Heart right ventricle (tissue), 16 donors: ENCODE measurements at regions of chr19 and their contacts with region 1.

Region 1: GRCh38 chr19:771332-771785 is 20.4 kb downstream of the MISP start:
- DNase-seq: peak in 1 of 2 donors; percentile 57
- ATAC-seq: peak in 6 of 8 donors; percentile 31 to 68 (median 60)
- H3K4me3 ChIP-seq: no peak overlapping the region
- H3K27ac ChIP-seq: no peak overlapping the region
- H3K4me1 ChIP-seq: peaks cover 0 to 12% (median 7%) of the 10 kb centered on the region in 9 donors
- H3K27me3 ChIP-seq: no peaks in the 10 kb centered on the region
- CTCF ChIP-seq: peak; percentile 39 to 67 (median 60)

Region 2: GRCh38 chr19:802498-803098 is 31.2 kb after region 1 on chr19:
- intact Hi-C with region 1: no loop called
- DNase-seq: peak in 1 of 2 donors; percentile 27
- ATAC-seq: no peak
- H3K4me3 ChIP-seq: peak overlapping the region in 8 of 10 donors; percentile 12 to 94 (median 82)
- H3K27ac ChIP-seq: peak overlapping the region in 8 of 10 donors; percentile 72 to 100 (median 96)
- H3K4me1 ChIP-seq: peaks cover 50 to 78% (median 61%) of the 10 kb centered on the region in 9 donors
- H3K27me3 ChIP-seq: no peaks in the 10 kb centered on the region
- CTCF ChIP-seq: no peak

Region 3: DNA sequence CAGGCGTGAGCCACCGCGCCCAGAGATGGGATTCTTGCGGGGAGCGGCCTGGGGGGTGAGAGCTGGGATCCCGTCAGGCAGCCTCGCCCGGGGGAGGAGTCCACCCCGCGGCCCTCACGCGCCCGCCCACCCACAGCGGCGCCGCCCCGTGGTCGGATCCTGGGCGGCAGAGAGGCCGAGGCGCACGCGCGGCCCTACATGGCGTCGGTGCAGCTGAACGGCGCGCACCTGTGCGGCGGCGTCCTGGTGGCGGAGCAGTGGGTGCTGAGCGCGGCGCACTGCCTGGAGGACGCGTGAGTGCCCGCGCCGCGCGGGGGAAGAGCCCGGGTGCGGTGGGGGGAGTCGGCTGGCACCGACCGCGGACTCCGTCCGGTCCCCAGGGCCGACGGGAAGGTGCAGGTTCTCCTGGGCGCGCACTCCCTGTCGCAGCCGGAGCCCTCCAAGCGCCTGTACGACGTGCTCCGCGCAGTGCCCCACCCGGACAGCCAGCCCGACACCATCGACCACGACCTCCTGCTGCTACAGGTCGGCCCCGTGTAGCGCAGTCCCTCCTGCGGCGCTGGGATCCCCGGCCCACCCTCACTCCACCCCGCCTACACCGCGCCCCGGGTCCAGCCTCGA is 89.2 kb after region 1 on chr19:
- intact Hi-C with region 1: loop called in 5 of 10 experiments (anchors 5 to 10 kb)
- DNase-seq: peak in 1 of 2 donors; percentile 75
- ATAC-seq: peak; percentile 46 to 67 (median 54)
- H3K4me3 ChIP-seq: peak overlapping the region; percentile 16 to 57 (median 46)
- H3K27ac ChIP-seq: peak overlapping the region in 8 of 10 donors; percentile 34 to 86 (median 78)
- H3K4me1 ChIP-seq: peaks cover 0 to 46% (median 10%) of the 10 kb centered on the region in 9 donors
- H3K27me3 ChIP-seq: peaks cover 0 to 51% (median 37%) of the 10 kb centered on the region in 7 donors
- CTCF ChIP-seq: peak in 5 of 9 donors; percentile 19 to 43 (median 25)

Region 4: DNA sequence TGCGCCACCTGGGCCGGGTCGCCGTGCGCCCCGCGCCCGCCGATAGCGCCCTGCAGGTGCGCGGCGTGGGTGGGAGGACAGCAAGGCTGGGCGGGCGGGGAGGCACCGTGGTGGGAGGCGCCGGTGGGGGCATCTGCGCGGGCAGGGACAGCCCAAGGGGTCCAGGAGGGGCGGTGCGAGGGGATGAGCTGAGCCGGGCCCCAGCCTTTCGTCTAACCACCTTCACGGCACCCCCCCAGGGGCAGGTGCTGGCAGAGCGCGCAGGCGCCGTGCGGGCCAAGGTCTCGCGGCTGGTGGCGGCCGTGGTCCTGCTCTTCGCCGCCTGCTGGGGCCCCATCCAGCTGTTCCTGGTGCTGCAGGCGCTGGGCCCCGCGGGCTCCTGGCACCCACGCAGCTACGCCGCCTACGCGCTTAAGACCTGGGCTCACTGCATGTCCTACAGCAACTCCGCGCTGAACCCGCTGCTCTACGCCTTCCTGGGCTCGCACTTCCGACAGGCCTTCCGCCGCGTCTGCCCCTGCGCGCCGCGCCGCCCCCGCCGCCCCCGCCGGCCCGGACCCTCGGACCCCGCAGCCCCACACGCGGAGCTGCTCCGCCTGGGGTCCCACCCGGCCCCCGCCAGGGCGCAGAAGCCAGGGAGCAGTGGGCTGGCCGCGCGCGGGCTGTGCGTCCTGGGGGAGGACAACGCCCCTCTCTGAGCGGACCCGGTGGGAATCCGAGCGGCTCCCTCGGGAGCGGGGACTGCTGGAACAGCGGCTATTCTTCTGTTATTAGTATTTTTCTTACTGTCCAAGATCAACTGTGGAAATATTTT is 148.9 kb after region 1 on chr19:
- intact Hi-C with region 1: loop called in 9 of 10 experiments (anchors 1 to 5 kb)
- DNase-seq: no peak
- ATAC-seq: peak in 2 of 8 donors; percentile 1 to 4
- H3K4me3 ChIP-seq: peak overlapping the region in 7 of 10 donors; percentile 5 to 48 (median 17)
- H3K27ac ChIP-seq: peak overlapping the region in 1 of 10 donors; percentile 26
- H3K4me1 ChIP-seq: peaks cover 13 to 68% (median 40%) of the 10 kb centered on the region in 9 donors
- H3K27me3 ChIP-seq: peaks cover 30 to 57% (median 55%) of the 10 kb centered on the region in 7 donors
- CTCF ChIP-seq: no peak

Region 5: DNA sequence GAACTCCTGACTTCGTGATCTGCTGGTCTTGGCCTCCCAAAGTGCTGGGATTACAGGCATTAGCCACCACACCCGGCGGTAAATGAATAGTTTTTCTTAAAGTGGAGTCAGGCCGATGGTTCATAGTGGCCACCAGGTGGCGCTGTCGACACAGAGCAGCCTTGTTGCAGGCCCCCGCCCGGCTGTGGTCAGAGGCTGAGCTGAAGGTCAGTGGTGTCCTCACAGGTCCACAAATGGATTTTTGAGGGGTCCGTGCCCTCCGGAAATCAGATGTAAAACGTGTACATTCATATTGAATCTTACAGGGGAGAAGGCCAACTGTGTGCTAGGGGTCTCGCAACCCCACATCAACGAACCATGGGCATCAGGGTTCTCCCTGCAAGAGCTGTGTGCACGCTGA is 199.3 kb after region 1 on chr19:
- intact Hi-C with region 1: loop called in 3 of 10 experiments (anchors 5 to 10 kb)
- DNase-seq: no peak
- ATAC-seq: no peak
- H3K4me3 ChIP-seq: no peak overlapping the region
- H3K27ac ChIP-seq: no peak overlapping the region
- H3K4me1 ChIP-seq: no peaks in the 10 kb centered on the region
- H3K27me3 ChIP-seq: no peaks in the 10 kb centered on the region
- CTCF ChIP-seq: peak in 8 of 9 donors; percentile 14 to 49 (median 43)

Region 6: GRCh38 chr19:984165-984967 is 213.0 kb after region 1 on chr19 and contains the start of gene WDR18:
- intact Hi-C with region 1: loop called (anchors 5 to 10 kb)
- DNase-seq: peak; percentile 94 to 95
- ATAC-seq: peak; percentile 92 to 97 (median 96)
- H3K4me3 ChIP-seq: peak within 1 kb of the TSS; percentile 49 to 99 (median 94)
- H3K27ac ChIP-seq: peak within 1 kb of the TSS in 9 of 10 donors; percentile 77 to 92 (median 87)
- H3K4me1 ChIP-seq: peaks cover 4 to 36% (median 22%) of the 10 kb centered on the region in 9 donors
- H3K27me3 ChIP-seq: no peaks in the 10 kb centered on the region
- CTCF ChIP-seq: peak in 6 of 9 donors; percentile 14 to 48 (median 35)
- total RNA-seq, gene WDR18: 17.3 to 25.0 (median 20.3) TPM